ENCODE measurements at regions of chr2 and their contacts with region 1.

Region 1: DNA sequence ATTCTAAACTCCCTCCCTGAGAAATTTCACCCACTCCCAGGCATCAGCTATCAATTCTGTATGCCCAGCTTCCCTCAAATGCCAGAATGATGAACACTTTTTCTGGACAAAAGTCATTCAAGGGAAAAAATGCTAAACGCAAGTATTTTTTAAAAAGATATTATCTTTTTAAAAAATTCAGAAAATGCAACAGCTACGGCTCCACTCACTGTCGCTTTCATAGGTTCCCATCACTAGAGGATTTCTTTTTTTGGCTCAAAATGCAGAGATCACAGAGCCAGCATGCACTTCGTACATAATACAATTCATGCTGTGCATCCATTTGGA is 5.1 kb downstream of the CAPG start:
- DNase-seq: no peak
- H3K4me3 ChIP-seq: no peak overlapping the region
- CTCF ChIP-seq: no peak
- POLR2A ChIP-seq: no peak

Region 2: DNA sequence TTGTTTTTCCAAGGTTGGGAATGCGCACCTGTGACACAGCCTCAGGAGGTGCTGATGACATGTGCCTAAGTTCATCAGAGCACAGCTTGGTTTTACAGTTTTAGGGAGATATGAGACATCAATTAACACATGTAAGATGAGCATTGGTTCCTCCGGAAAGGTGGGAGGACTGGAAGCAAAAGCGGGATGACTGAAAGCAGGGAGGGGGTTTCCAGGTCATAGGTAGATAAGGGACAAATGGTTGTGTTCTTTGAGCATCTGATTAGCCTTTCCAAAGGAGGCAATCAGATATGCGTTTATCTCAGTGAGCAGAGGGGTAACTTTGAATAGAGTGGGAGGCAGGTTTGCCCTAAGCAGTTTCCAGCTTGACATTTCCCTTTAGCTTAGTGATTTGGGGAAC is 21.2 kb before region 1 on chr2:
- intact Hi-C with region 1: loop called (anchors 1 kb)
- DNase-seq: no peak
- H3K4me3 ChIP-seq: no peak overlapping the region
- CTCF ChIP-seq: no peak
- POLR2A ChIP-seq: no peak

Measured in lower leg skin (tissue), 4 donors.